ENCODE measurements at regions of chr7 and their contacts with region 1.

Region 1: DNA sequence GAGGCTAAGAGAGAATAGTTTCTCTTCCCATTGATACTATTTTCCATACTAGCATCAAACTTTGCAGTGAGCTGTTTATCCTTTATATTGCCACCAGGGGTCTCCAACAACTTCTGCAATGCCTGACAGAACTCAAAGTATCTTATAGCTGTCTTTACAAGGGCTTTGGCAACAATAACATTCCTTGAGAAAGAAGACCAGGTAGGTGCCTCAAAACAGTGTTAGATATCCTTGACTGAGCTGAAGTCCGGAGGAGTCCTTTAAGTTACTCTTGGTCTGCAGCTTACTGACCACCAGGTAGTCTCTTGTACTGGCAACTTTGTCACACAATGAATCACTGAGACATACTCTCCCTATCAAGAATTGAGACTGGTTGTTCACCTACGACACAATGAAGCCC is 30.0 kb upstream of the TES start:
- DNase-seq: peak in 1 of 2 experiments; percentile 48
- H3K4me3 ChIP-seq: no peak overlapping the region
- H3K27ac ChIP-seq: no peak overlapping the region
- H3K4me1 ChIP-seq: no peaks in the 10 kb centered on the region
- H3K27me3 ChIP-seq: no peaks in the 10 kb centered on the region
- CTCF ChIP-seq: peak in 2 of 3 experiments; percentile 70; a peak in 3 of 4 replicates
- EP300 ChIP-seq: no peak
- POLR2A ChIP-seq: no peak
- RAD21 ChIP-seq: peak; percentile 75 to 77

Region 2: GRCh38 chr7:116165717-116166116 is 14.6 kb before region 1 on chr7:
- CTCF ChIA-PET with region 1: interaction called, 27 read pairs
- POLR2A ChIA-PET with region 1: no interaction called
- DNase-seq: no peak
- H3K4me3 ChIP-seq: no peak overlapping the region
- H3K27ac ChIP-seq: no peak overlapping the region
- H3K4me1 ChIP-seq: peaks cover 0 to 4% (median 0%) of the 10 kb centered on the region in 4 experiments; a peak in 2 of 7 replicates
- H3K27me3 ChIP-seq: no peaks in the 10 kb centered on the region
- CTCF ChIP-seq: no peak
- EP300 ChIP-seq: no peak
- POLR2A ChIP-seq: no peak
- RAD21 ChIP-seq: no peak

Region 3: GRCh38 chr7:116224492-116225098 is 44.3 kb after region 1 on chr7:
- CTCF ChIA-PET with region 1: interaction called, 175 read pairs
- POLR2A ChIA-PET with region 1: no interaction called
- DNase-seq: no peak
- H3K4me3 ChIP-seq: no peak overlapping the region
- H3K27ac ChIP-seq: no peak overlapping the region
- H3K4me1 ChIP-seq: no peaks in the 10 kb centered on the region
- H3K27me3 ChIP-seq: no peaks in the 10 kb centered on the region
- CTCF ChIP-seq: no peak
- EP300 ChIP-seq: no peak
- POLR2A ChIP-seq: no peak
- RAD21 ChIP-seq: no peak

Region 4: DNA sequence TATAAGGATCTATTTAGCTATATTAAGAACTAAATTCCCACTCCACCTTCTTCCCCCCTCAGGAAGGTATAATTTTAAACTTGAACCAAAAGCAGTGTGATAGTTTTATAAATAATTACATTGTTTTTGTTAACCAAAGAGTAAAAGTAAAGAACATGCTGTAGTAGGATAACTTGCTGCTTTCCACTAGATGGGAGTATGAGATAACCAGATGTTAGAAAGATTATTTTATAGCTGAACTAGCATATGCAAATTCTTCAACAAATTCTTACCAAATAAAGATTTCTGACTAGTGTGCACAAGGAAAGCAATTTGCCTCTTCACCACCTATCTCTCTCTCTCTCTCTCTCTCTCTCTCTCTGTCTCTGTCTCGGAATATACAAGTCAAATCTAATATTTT is 61.9 kb after region 1 on chr7:
- CTCF ChIA-PET with region 1: interaction called, 175 read pairs
- POLR2A ChIA-PET with region 1: no interaction called
- DNase-seq: no peak
- H3K4me3 ChIP-seq: no peak overlapping the region
- H3K27ac ChIP-seq: no peak overlapping the region
- H3K4me1 ChIP-seq: no peaks in the 10 kb centered on the region; a peak in 1 of 7 replicates
- H3K27me3 ChIP-seq: no peaks in the 10 kb centered on the region
- CTCF ChIP-seq: no peak
- EP300 ChIP-seq: no peak
- POLR2A ChIP-seq: no peak
- RAD21 ChIP-seq: no peak

Region 5: GRCh38 chr7:116249708-116250553 is 69.6 kb after region 1 on chr7:
- CTCF ChIA-PET with region 1: interaction called, 17 read pairs
- POLR2A ChIA-PET with region 1: no interaction called
- DNase-seq: peak in 1 of 2 experiments; percentile 54
- H3K4me3 ChIP-seq: no peak overlapping the region
- H3K27ac ChIP-seq: no peak overlapping the region
- H3K4me1 ChIP-seq: peaks cover 0 to 2% (median 0%) of the 10 kb centered on the region in 4 experiments; a peak in 1 of 7 replicates
- H3K27me3 ChIP-seq: no peaks in the 10 kb centered on the region
- CTCF ChIP-seq: peak; percentile 60 to 76 (median 69)
- EP300 ChIP-seq: no peak
- POLR2A ChIP-seq: no peak
- RAD21 ChIP-seq: peak; percentile 46 to 64

Region 6: GRCh38 chr7:116293139-116293538 is 112.8 kb after region 1 on chr7:
- CTCF ChIA-PET with region 1: no interaction called
- POLR2A ChIA-PET with region 1: no interaction called
- DNase-seq: no peak
- H3K4me3 ChIP-seq: no peak overlapping the region
- H3K27ac ChIP-seq: no peak overlapping the region
- H3K4me1 ChIP-seq: no peaks in the 10 kb centered on the region
- H3K27me3 ChIP-seq: no peaks in the 10 kb centered on the region
- CTCF ChIP-seq: peak in 1 of 3 experiments; percentile 26; a peak in 1 of 4 replicates
- EP300 ChIP-seq: no peak
- POLR2A ChIP-seq: no peak
- RAD21 ChIP-seq: peak in 1 of 2 experiments; percentile 8; a peak in 2 of 4 replicates

Measured in H1 (cell line).